ENCODE measurements at regions of chrX and their contacts with region 1.

Region 1: DNA sequence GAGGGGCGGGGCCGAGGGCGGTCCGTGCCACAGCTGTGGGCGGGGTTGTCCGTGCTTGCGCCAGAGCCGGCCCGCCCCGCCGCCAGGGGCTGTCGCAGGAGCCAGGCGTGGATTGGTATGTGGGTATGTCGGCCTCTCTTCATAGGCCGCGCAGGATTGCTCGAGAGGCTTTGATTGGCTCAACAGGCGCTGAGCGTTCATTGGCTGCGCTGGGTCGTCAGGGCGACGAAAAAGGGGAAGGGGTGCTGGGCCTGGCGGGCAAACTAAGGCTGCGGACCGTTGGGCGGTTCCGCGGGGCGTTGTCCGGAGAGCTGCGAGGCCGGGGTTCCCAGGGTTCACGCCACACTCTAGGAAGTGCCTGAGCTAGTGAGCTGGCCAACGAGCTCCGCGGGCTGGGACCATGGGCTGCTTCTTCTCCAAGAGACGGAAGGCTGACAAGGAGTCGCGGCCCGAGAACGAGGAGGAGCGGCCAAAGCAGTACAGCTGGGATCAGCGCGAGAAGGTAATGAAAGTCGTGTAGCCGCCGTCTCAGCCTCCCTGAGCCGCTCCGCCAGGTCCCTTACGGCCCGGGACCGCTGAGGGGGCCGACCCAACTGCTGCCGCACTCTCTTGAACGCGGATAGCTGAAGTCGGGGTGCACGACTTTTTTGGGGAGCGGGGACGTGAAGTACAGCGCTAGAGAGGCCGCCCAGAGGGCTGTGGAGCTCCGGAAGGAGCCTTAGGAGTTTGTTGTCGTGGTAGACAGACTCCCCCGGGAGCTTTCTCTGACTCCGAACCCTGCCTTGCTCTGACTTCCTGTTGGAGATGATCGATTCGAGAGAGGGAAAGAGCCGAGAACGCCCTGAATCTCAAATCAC is at the start of gene RP2:
- DNase-seq: peak; percentile 81 to 83
- H3K4me3 ChIP-seq: peak within 1 kb of the TSS; percentile 65
- H3K27ac ChIP-seq: peak within 1 kb of the TSS; percentile 68
- H3K4me1 ChIP-seq: no peaks in the 10 kb centered on the region; the same call in 1 of the 2 replicates
- H3K27me3 ChIP-seq: no peaks in the 10 kb centered on the region
- CTCF ChIP-seq: no peak
- total RNA-seq, gene RP2: 7.8 and 11.2 TPM in 2 replicates

Region 2: GRCh38 chrX:46737473-46737872 is 99.5 kb before region 1 on chrX:
- CTCF ChIA-PET with region 1: no interaction called
- POLR2A ChIA-PET with region 1: no interaction called
- intact Hi-C with region 1: no loop called
- DNase-seq: no peak
- H3K4me3 ChIP-seq: no peak overlapping the region
- H3K27ac ChIP-seq: no peak overlapping the region
- H3K4me1 ChIP-seq: no peaks in the 10 kb centered on the region
- H3K27me3 ChIP-seq: no peaks in the 10 kb centered on the region
- CTCF ChIP-seq: no peak

Region 3: GRCh38 chrX:46796574-46797191 is 40.2 kb before region 1 on chrX:
- CTCF ChIA-PET with region 1: interaction called, 16 read pairs
- POLR2A ChIA-PET with region 1: interaction called, 3 read pairs
- intact Hi-C with region 1: no loop called
- DNase-seq: peak; percentile 45 to 50
- H3K4me3 ChIP-seq: no peak overlapping the region
- H3K27ac ChIP-seq: no peak overlapping the region
- H3K4me1 ChIP-seq: peaks cover 19% of the 10 kb centered on the region
- H3K27me3 ChIP-seq: no peaks in the 10 kb centered on the region
- CTCF ChIP-seq: peak; percentile 68

Region 4: GRCh38 chrX:46812445-46812844 is 24.5 kb before region 1 on chrX:
- CTCF ChIA-PET with region 1: no interaction called
- POLR2A ChIA-PET with region 1: interaction called, 3 read pairs
- intact Hi-C with region 1: loop called (anchors 1 kb)
- DNase-seq: peak; percentile 31 to 86
- H3K4me3 ChIP-seq: no peak overlapping the region
- H3K27ac ChIP-seq: peak overlapping the region; percentile 88
- H3K4me1 ChIP-seq: peaks cover 19% of the 10 kb centered on the region
- H3K27me3 ChIP-seq: no peaks in the 10 kb centered on the region
- CTCF ChIP-seq: no peak

Measured in PC-9 (cell line).